ENCODE measurements at regions of chr11 and their contacts with region 1.

Region 1: GRCh38 chr11:126440792-126441514 is 85.5 kb downstream of the ST3GAL4 start:
- DNase-seq: peak; percentile 66
- H3K4me3 Mint-ChIP-seq: no peak overlapping the region
- H3K27ac Mint-ChIP-seq: no peak overlapping the region
- H3K4me1 Mint-ChIP-seq: peaks cover 6% of the 10 kb centered on the region
- H3K27me3 Mint-ChIP-seq: peaks cover 4% of the 10 kb centered on the region

Region 2: DNA sequence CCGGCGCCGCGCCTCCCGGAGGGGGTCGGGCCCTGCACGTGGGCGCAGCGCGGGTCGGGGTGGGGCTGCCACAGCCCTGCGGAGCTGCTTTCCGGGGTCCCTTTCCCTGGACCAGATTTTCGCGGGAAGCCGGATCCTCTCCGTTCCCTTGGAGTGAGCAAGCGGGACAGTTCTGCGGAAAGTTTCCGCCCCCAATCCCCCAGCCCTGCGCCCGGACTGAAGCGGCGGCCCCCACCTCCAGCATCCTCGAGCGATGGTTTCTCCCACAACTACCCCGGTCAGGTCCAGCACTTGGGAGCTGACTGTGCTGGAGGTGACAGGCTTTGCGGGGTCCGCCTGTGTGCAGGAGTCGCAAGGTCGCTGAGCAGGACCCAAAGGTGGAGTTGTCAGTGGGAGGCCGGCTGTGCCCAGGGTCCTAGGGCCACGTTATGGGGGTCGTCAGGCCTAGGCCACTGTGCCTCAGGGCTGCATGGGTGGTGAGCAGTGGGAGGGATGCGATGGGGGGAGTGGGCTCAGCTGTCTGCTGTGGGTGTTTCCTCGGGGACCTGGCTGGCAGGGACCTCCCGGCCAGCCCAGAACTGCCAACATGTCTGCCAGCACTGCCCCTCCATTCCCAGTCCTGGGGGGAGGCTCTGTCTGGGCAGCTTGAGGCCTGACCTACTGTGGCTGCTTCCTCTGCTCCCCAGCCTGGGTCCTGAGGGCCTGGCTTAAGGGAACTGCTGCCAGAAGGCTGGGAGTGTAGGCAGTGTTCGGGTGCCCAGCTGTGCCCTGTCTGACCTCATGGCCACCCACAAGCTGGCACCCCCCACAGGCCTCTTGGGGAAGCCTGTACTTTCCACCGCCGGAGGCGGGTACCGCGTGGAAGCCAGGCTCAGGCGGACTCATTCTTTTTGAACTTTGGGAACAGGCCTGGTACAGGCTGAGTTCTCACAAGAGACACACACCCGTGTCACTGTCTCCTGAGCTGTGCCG is 84.7 kb before region 1 on chr11:
- intact Hi-C with region 1: no loop called
- DNase-seq: no peak
- H3K4me3 Mint-ChIP-seq: peak overlapping the region; percentile 81
- H3K27ac Mint-ChIP-seq: peak overlapping the region; percentile 46
- H3K4me1 Mint-ChIP-seq: peaks cover 29% of the 10 kb centered on the region
- H3K27me3 Mint-ChIP-seq: no peaks in the 10 kb centered on the region

Region 3: DNA sequence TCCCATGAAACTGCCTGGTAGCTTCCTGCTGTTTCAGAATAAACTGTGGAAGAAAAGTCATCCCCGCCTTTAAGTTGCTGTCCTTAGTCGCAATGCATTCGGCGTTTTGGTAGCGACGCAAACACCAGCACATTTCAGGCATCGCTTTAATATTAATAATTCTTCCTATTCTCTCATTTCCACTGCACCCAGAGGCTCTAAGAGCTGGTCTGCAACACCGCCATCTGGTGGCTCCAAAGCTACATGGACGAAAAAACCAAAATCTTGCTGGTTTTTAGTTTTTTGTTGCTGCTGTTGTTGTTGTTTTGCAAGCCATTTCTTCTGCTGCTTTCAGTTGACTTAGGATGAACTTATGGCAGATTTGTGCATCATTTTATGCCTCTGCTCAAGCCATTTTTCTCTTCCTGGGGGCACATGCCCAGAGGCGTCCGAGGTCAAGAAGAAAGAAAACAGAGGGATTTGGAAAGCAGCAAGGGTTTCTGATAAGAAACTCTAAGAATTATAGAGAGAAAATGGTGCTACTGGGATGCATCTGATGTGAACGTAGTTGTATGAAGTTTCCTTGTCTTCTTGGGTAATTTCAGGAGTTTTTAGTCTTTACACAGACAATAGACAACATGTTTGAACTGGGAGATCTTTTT is 905.0 kb after region 1 on chr11:
- intact Hi-C with region 1: loop called (anchors 5 kb)
- DNase-seq: no peak
- H3K4me3 Mint-ChIP-seq: no peak overlapping the region
- H3K27ac Mint-ChIP-seq: no peak overlapping the region
- H3K4me1 Mint-ChIP-seq: no peaks in the 10 kb centered on the region
- H3K27me3 Mint-ChIP-seq: no peaks in the 10 kb centered on the region

Measured in activated T-helper 2 cell treated with anti-CD3 and anti-CD28 coated beads, Interferon-gamma antibody, Interleukin-2, Interleukin-4, amounts not matched to agents 10 μg/mL and 5 μg/mL and 100 μg/mL, durations not matched to agents 14 hours and 24 hours and 36 hours (primary cell).